Prostate gland (tissue), 2 donors: ENCODE measurements at regions of chr10 and their contacts with region 1.

Region 1: GRCh38 chr10:72364239-72364777 is 9.6 kb upstream of the DNAJB12 start:
- DNase-seq: peak; percentile 79
- H3K4me3 ChIP-seq: no peak overlapping the region
- H3K27ac ChIP-seq: peak overlapping the region in 1 of 2 donors; percentile 30
- H3K4me1 ChIP-seq: no peaks in the 10 kb centered on the region
- H3K27me3 ChIP-seq: no peaks in the 10 kb centered on the region
- CTCF ChIP-seq: peak; percentile 68 to 98 (median 92)
- POLR2A ChIP-seq: peak; percentile 22

Region 2: GRCh38 chr10:72834183-72834825 is 470.0 kb after region 1 on chr10:
- intact Hi-C with region 1: loop called (anchors 2 kb)
- DNase-seq: peak; percentile 43
- H3K4me3 ChIP-seq: no peak overlapping the region
- H3K27ac ChIP-seq: no peak overlapping the region
- H3K4me1 ChIP-seq: no peaks in the 10 kb centered on the region
- H3K27me3 ChIP-seq: no peaks in the 10 kb centered on the region
- CTCF ChIP-seq: peak in 3 of 4 experiments; percentile 50 to 76 (median 75)
- POLR2A ChIP-seq: no peak

Region 3: GRCh38 chr10:72875250-72876055 is 511.1 kb after region 1 on chr10:
- intact Hi-C with region 1: loop called (anchors 10 kb)
- DNase-seq: no peak
- H3K4me3 ChIP-seq: no peak overlapping the region
- H3K27ac ChIP-seq: no peak overlapping the region
- H3K4me1 ChIP-seq: no peaks in the 10 kb centered on the region
- H3K27me3 ChIP-seq: no peaks in the 10 kb centered on the region
- CTCF ChIP-seq: peak in 3 of 4 experiments; percentile 11 to 53 (median 53)
- POLR2A ChIP-seq: no peak

Region 4: GRCh38 chr10:73060738-73061635 is 696.7 kb after region 1 on chr10:
- intact Hi-C with region 1: loop called (anchors 10 kb)
- DNase-seq: no peak
- H3K4me3 ChIP-seq: no peak overlapping the region
- H3K27ac ChIP-seq: no peak overlapping the region
- H3K4me1 ChIP-seq: no peaks in the 10 kb centered on the region
- H3K27me3 ChIP-seq: no peaks in the 10 kb centered on the region
- CTCF ChIP-seq: peak in 2 of 4 experiments; percentile 41 to 52
- POLR2A ChIP-seq: no peak

Region 5: GRCh38 chr10:73159038-73159648 is 794.8 kb after region 1 on chr10:
- intact Hi-C with region 1: loop called (anchors 5 kb)
- DNase-seq: peak; percentile 37
- H3K4me3 ChIP-seq: no peak overlapping the region
- H3K27ac ChIP-seq: no peak overlapping the region
- H3K4me1 ChIP-seq: no peaks in the 10 kb centered on the region
- H3K27me3 ChIP-seq: no peaks in the 10 kb centered on the region
- CTCF ChIP-seq: peak; percentile 26 to 73 (median 64)
- POLR2A ChIP-seq: no peak